ENCODE measurements at regions of chr20 and their contacts with region 1.

Region 1: GRCh38 chr20:21719592-21720214 is 14.2 kb downstream of the PAX1 start:
- DNase-seq: no peak

Region 2: DNA sequence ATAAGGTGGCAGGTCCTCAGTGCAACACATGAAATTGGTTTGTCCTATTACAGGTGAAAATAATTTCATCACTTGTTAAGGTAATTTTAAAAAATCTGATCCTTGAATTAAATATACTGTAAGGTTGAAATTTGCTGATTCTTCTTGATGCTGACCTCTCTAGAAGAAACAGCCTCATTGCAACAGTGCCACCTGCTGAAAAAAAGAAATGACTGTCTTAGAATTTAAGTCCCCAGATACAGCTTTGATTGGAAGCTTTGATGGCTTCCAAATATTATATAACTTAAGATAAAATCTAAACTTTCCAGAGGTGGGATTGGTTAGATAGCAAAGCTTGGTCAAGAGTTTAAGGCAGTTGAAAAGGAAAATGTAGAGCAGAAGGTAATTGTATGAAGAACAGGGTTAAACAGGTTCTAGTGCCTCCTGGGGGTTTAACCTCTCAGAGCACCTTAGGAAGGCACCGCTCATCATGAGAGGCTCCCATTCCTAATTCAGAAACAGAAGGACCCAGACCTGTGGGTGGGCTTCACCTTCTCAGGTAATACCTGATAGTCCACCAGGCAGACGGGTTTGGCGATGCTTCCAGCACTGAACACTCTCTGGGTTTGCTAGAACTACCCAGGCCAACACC is 386.7 kb after region 1 on chr20:
- intact Hi-C with region 1: loop called (anchors 5 kb)
- DNase-seq: no peak

Region 3: GRCh38 chr20:22248051-22248667 is 528.5 kb after region 1 on chr20:
- intact Hi-C with region 1: loop called (anchors 5 kb)
- DNase-seq: no peak